ENCODE measurements at regions of chr20 and their contacts with region 1.

Region 1: DNA sequence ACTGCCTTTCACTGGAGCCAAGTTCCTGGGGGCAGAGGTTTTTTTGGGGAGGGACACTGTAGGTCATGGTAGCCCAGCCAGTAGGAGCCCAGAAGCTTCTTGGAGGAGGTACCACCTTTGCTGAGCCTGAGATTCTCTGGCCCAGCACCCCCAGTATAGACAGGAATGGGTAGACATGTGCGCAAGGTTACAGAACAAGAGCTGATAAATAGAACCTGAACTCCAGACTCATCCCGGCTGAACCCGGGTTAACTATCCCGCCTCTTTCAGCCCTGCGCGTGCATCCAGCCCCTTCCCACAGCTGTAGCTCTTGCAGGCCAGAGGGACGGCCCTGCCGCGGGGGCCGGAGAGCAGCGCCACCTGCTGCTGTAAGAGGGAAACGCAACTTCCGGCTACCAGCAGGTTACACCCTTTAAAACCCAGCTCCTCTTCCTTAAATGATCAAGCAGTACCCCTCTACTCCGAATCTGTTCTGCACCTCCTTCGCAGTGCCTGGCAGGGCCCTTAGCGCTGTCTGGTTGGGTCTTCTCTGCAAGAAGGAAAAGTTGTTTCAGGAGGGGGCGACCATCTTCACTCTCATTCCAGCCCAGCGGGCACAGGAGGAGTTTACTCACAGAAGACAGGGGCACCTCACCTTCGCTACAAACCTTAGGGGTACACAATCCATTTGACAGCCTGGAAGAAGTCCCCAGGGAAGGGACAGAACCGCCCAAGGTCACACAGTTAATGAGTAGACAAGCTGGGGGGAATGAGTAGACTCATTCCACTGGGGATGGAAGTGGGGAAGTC is 7.5 kb downstream of the SRXN1 start:
- DNase-seq: no peak
- H3K4me3 ChIP-seq: no peak overlapping the region
- CTCF ChIP-seq: peak; percentile 96

Region 2: GRCh38 chr20:555933-556526 is 89.5 kb before region 1 on chr20:
- CTCF ChIA-PET with region 1: interaction called, 96 read pairs
- POLR2A ChIA-PET with region 1: no interaction called
- DNase-seq: no peak
- H3K4me3 ChIP-seq: no peak overlapping the region
- CTCF ChIP-seq: no peak

Region 3: GRCh38 chr20:571754-572441 is 73.6 kb before region 1 on chr20:
- CTCF ChIA-PET with region 1: interaction called, 10 read pairs
- POLR2A ChIA-PET with region 1: no interaction called
- DNase-seq: no peak
- H3K4me3 ChIP-seq: no peak overlapping the region
- CTCF ChIP-seq: no peak

Region 4: DNA sequence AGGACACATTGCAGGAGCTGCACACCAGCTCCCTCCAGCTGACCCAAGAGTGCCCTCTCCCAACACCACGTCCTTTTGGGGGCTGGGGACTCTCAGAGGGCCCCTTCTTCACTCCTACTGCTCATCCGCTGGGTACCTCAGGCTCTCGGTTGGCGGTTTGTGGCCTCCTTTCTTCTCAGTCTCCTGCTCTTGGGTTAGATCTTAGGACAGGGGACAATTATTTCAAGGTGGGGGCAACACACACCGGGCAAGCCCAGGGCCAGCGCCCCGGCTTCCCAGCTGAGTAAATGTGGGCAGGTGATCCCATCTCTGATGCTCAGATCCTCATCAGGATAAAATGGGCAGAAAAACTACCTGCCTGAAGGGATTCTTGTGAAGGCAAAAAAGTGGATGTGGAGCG is 36.5 kb before region 1 on chr20:
- CTCF ChIA-PET with region 1: no interaction called
- POLR2A ChIA-PET with region 1: no interaction called
- DNase-seq: no peak
- H3K4me3 ChIP-seq: no peak overlapping the region
- CTCF ChIP-seq: no peak

Region 5: GRCh38 chr20:618980-619379 is 26.5 kb before region 1 on chr20:
- CTCF ChIA-PET with region 1: interaction called, 14 read pairs
- POLR2A ChIA-PET with region 1: no interaction called
- DNase-seq: no peak
- H3K4me3 ChIP-seq: no peak overlapping the region
- CTCF ChIP-seq: no peak

Region 6: GRCh38 chr20:658731-659291 is 13.3 kb after region 1 on chr20:
- CTCF ChIA-PET with region 1: interaction called, 47 read pairs
- POLR2A ChIA-PET with region 1: no interaction called
- DNase-seq: no peak
- H3K4me3 ChIP-seq: no peak overlapping the region
- CTCF ChIP-seq: no peak

Region 7: GRCh38 chr20:667391-667964 is 22.0 kb after region 1 on chr20:
- CTCF ChIA-PET with region 1: interaction called, 47 read pairs
- POLR2A ChIA-PET with region 1: no interaction called
- DNase-seq: no peak
- H3K4me3 ChIP-seq: no peak overlapping the region
- CTCF ChIP-seq: peak; percentile 87

Region 8: GRCh38 chr20:740141-740540 is 94.6 kb after region 1 on chr20:
- CTCF ChIA-PET with region 1: interaction called, 22 read pairs
- POLR2A ChIA-PET with region 1: no interaction called
- DNase-seq: no peak
- H3K4me3 ChIP-seq: no peak overlapping the region
- CTCF ChIP-seq: no peak

Region 9: DNA sequence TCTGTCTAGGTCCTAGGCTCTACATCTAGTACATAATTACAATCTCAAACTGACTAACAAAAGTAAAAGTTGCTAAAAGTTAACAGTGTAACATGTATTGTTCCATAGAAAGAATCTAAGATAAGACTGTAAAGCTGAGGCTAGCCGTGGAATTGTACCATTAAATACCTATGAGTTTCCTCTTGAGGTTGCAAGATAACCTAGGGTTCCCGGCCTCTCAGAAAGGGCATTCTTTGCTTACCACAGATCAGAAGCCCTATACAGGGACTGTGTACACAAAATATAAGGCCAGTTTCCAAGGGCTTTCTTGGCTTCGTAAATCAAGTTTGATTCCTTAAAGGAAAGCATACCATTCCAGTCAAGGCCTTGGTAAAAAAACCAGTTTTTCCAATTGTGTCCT is 134.3 kb after region 1 on chr20:
- CTCF ChIA-PET with region 1: no interaction called
- POLR2A ChIA-PET with region 1: no interaction called
- DNase-seq: no peak
- H3K4me3 ChIP-seq: no peak overlapping the region
- CTCF ChIP-seq: no peak

Region 10: DNA sequence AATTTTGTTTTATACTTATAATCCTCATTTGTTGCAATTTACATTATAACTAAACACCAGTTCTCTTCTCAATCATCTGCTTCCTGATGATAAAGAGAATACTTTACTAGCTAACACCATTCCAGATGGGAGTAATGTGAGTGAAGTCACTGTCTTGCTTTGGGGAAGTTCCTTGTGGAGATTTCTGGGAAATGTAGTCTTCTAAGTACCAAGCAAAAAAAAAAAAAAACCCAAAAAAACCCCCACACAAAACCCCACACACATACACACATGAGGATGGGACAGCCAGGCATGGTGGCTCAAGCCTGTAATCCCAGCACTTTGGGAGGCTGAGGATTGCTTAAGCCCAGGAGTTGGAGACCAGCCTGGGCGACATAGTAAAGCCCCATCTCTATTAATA is 618.3 kb after region 1 on chr20:
- CTCF ChIA-PET with region 1: no interaction called
- POLR2A ChIA-PET with region 1: no interaction called
- DNase-seq: no peak
- H3K4me3 ChIP-seq: no peak overlapping the region
- CTCF ChIP-seq: no peak